ENCODE measurements at regions of chr11 and their contacts with region 1.

Region 1: DNA sequence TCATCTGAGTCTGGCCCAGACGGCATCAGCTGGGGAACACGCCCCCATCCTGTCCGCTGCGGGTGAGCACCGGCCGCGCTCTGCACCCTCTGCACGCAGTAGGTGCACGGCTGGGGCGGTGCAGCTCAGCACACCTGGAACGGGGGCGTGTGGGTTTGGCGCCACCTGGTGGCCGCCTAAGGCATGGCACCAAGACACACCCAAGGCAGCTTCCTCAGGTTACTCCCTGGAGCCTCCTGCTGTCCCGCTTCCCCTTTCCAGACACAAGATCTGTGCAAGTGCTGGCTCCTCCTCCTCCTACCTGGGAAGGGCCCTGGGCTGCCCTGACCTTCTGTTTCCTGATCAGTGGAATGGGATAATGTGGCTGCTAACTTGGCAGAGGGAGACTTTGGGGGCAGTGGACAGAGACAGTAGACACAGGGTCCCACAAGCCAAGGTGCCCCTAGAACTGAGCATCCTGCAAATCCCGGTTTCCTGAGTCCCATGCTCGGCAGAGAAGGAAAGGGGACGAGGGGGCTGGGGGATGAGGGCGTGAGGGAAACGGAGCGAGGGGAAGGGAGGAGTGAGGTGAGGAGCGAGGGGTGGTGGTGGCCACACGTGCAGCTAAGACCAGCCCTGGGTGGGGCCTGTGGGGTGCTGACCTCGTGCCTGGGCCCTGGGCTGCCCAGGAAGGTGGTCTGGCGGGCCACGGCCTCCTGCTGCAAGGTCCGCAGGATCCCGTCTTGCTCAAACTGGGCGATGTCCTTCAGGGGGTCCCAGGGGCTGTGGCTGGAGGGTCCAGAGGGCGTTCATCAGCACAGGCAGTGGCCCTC is 34.8 kb upstream of the CARS1 start:
- H3K4me3 ChIP-seq: no peak overlapping the region
- H3K27ac ChIP-seq: no peak overlapping the region
- H3K4me1 ChIP-seq: no peaks in the 10 kb centered on the region
- CTCF ChIP-seq: peak; percentile 96

Region 2: GRCh38 chr11:2930704-2931428 is 161.1 kb before region 1 on chr11:
- CTCF ChIA-PET with region 1: interaction called, 11 read pairs
- POLR2A ChIA-PET with region 1: no interaction called
- H3K4me3 ChIP-seq: peak overlapping the region; percentile 2; the same call in 1 of the 2 replicates
- H3K27ac ChIP-seq: no peak overlapping the region
- H3K4me1 ChIP-seq: no peaks in the 10 kb centered on the region
- CTCF ChIP-seq: peak; percentile 78

Region 3: DNA sequence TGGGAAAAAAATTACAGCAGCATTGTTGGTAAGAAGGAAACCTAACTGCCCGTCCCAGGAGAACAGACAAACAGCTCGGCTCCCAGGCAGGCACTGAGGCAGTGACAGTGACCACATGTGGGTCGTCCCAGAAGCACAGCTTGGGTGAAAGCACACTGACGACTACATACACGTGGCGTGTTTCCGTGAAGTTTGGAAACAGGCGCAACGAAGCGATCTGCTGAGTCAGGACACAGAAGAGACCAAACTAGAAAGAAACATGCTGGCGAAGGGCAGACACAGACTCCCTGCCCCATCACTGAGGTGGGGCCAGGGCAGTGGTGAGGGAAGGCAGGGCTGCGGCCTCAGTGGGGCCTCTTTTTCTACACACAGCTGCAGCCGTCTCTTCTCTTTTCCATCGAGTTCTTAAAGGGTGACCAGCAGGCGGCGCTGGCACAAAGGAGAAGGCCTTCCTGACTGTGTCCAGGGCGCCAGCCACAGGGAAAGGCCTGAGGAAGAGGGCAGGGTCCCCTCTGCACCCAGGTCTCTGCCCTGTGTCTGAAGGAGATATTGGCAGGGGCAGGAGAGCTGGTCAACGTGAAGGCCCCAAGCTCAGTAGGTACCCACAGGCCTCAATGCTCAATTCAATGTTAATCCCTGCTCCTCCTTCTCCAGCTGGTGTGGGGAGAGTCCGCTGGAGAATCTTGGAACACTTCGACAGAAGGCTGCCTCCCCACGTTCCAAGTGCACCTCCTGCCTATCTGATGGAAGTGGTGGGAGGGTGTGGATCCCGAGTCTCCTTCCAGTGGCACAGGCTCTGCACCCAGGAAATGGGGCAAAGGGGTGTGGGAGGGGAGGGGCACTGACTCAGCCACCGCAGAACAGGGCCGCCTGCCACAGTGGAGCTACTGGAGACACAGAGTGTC is 54.7 kb before region 1 on chr11:
- CTCF ChIA-PET with region 1: interaction called, 144 read pairs
- POLR2A ChIA-PET with region 1: interaction called, 9 read pairs
- H3K4me3 ChIP-seq: no peak overlapping the region
- H3K27ac ChIP-seq: no peak overlapping the region
- H3K4me1 ChIP-seq: no peaks in the 10 kb centered on the region
- CTCF ChIP-seq: peak; percentile 32; the same call in 1 of the 2 replicates

Region 4: DNA sequence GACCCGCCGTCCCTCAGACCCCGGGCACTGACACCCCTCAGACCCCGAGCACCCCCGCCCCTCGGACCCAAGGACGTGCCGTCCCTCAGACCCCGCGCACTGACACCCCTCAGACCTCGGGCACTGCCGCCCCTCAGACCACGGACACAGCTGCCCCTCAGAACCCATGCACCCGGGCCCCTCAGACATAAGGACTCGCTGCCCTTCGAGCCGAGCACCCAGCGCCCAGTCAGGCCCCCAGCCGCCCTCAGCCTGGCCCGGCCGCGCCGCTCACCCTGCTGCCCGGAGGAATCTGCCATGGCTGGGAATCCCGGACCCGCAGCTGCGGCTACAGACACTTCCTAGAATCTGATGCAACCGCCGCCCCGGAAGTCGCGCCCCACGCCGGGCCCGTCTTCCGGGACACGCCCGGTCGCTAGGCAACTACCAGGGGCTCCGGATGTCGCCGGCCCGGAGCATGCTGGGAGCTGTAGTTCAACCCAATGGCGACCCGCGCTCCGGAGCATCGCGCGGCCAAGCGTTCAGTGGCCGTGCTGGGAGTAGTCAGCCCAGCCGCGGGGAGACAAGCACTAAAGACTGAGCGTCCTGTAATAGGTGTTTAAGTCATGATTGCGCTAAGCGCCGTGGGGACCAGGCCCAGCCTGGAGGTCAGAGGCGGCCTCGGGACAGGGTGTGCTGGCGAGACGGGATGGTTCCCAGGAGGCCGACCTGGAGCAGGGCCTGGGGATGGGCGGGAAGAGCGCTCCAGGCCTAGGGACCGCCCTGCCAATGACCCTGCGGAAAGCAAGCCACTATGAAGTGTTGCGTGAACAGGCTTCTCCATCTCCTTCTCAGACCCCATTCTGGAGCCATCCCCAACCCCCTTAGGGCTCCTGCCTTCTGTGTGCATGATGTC is 34.7 kb before region 1 on chr11 and contains the start of gene CARS1:
- CTCF ChIA-PET with region 1: interaction called, 98 read pairs
- POLR2A ChIA-PET with region 1: interaction called, 12 read pairs
- H3K4me3 ChIP-seq: peak within 1 kb of the TSS; percentile 94
- H3K27ac ChIP-seq: peak within 1 kb of the TSS; percentile 57
- H3K4me1 ChIP-seq: peaks cover 3% of the 10 kb centered on the region; the same call in 1 of the 2 replicates
- CTCF ChIP-seq: 0 out of 2 replicates have a peak, but pooled peaks have one; percentile 11

Region 5: DNA sequence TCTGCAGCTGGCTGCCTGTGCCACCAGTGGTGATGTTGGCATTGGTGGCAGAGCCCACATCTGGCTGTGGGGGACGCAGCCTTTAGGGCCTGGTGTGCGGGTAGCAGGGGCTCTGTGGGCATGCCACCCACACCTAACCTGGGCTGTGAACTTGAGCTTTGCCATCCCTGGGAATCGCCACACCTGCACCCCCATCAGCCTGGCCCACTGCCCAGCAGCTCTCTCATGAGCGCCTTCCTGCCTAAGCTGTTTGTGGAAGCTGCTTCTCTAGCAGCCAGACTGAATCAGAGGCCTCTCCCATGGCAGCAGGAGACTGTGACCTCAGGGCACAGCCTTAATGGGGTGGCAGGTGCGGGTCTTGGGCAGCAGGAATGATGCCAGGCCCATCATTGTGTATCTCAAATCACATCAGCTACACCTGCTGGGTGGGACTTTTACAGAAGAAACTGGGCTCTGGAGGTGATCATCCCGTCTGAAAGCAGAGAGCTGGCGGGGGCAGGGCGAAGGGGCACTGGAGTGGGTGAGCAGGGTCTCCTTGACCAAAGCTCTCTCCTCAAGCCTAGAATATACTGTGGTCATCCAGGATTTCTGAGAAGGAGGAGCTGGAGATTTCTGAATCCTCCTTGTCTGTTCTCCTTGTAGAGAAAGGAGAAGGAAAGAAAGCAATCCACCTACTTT is 16.9 kb before region 1 on chr11:
- CTCF ChIA-PET with region 1: interaction called, 24 read pairs
- POLR2A ChIA-PET with region 1: no interaction called
- H3K4me3 ChIP-seq: no peak overlapping the region
- H3K27ac ChIP-seq: no peak overlapping the region
- H3K4me1 ChIP-seq: no peaks in the 10 kb centered on the region
- CTCF ChIP-seq: no peak